ENCODE measurements at regions of chr1 and their contacts with region 1.

Region 1: DNA sequence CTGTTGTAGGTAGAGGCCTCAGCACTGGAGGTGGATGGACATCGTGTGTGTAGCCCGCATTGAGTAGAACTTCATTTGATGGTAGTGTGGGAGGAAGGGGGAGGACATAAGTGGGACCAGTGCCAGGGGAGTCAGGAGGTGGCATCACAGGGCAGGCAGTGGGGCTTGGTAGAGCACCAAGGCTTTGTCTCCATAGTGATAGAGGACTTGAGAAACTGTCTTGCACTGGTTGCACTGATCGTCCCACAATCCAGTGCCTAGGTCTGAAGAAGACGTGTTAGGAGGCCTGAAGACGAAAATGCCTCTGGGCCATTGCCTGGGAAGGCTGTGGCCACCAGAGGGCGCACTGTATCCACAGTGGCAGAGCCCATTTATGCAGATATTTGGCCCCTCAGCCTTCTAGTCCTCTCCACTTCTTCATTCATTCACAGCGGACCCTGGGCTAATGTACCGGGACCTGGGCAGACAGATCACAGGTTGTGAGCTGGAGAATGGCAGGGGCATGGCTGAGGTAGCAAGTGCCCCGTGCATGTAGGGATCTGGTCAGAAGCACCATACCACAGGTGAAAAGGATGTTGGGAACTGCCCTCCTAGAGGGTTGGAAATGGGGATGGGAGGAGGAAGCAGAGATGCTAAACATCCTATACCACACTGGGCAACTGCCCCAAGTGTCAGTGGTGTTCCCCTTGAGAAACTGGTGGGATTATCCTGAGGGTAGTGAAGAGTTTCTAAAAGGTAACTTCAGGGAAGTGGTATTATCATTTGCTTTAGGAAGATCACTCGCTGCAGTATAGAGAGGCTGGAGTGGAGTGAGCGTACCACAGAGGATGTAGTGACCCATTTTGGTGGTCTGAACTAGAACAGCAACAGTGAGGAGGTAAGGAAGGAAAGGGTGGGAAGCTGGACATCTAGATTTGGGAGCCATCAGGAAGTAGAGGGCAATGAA is 95.3 kb downstream of the PIK3R3 start:
- DNase-seq: peak; percentile 63 to 95 (median 90)

Region 2: DNA sequence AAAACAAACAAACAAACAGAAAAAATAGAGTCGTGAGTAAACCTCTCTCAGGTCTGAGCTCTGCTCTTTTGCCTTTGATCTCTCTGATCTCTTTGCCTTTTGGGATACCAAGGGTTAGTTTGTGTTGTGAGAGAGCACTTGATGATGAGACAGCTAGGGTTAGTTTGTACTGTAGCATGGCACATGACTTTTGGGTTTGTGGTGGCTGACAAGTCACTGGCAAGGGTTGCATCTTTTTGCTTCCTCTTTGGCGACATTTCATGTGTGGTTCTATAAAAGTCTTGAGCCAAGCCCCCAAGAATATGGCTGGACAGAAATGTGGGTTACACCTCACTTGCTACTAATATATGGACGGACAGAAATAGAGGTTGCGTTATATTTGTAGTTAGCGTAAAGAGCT is 606.7 kb before region 1 on chr1:
- intact Hi-C with region 1: no loop called
- DNase-seq: no peak

Region 3: DNA sequence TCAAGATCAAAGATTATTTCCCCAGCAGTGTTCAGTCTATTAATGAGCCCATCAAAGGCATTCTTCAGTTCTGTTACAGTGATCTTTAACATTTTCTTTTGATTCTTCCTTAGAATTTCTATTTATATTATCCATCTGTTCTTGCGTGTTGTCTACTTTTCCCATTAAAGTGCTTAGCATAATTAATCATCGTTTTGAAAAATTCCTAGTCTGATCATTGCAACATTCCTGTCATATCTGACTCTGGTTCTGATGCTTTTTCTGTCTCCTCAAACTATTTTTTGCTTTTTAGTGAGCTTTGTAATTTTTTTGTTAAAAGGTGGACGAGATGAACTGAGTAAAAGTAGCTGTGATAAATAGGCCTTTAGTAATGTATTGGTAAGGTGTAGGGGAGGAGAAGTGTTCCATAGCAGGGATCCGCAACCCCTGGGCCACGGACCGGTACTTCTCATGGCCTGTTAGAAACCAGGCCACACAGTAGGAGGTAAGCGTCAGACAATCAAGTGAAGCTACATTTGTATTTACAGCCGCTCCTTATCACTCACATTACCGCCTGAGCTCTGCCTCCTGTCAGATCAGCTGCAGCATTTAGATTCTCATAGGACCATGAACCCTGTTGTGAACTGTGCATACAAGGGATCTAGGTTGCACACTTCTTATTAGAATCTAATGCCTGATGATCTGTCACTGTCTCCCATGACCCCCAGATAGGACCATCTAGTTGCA is 68.1 kb before region 1 on chr1:
- intact Hi-C with region 1: no loop called
- DNase-seq: no peak

Region 4: DNA sequence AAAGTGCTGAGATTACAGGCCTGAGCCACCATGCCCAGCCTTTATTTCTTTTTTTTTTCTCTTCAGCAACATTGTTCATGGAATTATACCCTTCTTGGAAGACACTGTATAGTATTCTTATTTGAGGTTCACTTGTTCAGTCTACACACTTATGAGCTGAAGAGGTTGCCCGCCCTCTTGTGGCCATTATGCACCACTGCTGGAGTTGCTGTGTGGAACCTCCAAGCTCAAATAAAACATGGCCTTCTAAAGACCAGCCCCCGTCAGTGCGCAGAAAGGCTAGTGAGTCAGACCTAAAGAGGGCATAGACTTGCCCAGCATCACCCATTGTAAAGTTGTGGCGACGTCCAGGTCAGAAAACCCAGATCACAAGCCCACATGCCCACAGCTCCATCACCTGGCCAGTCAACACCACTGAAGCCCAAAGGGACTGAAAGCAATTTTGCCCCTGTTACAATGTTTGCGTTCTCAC is 186.3 kb after region 1 on chr1:
- intact Hi-C with region 1: loop called (anchors 5 kb)
- DNase-seq: peak; percentile 54 to 93 (median 80)

Measured in head of caudate nucleus (tissue), 42 donors.